ENCODE measurements at regions of chr3 and their contacts with region 1.

Region 1: DNA sequence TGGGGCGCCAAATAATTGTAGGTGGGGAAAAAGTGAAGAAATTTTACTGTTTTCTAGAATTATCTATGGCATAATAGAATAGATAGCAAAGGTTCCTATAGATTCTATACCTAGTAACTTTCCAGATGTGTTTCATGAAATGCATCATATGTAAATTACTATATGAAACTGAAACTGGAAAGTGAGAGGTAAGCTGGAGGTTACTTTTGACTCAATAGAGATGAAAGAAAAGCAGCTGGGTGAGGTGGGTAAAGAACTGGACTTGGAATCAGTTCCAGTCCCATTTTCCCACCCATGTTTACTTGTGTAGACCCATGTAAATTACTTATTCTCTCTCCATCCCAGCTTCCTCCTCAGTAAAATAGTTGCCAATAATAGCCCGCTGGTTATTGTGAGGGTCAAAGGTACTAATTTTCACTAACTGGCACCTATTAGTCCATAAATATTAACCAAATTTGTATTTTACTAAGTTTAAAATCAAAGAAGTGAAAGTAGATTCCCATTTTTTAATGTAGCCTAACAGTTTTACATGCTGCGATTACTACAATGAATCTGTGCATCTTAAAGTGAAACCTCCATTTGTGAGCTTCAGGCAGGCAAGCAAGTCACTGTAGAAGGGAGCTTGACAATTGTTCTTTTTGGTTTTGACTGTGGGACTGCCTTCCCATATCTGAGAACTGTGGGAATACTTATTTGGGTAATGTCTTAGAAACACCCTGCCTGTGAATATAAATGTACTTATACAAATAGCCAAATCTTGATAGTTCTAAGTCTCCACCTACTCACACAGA is 312.1 kb downstream of the SLC9A9 start:
- DNase-seq: peak; percentile 62
- CTCF ChIP-seq: no peak

Region 2: DNA sequence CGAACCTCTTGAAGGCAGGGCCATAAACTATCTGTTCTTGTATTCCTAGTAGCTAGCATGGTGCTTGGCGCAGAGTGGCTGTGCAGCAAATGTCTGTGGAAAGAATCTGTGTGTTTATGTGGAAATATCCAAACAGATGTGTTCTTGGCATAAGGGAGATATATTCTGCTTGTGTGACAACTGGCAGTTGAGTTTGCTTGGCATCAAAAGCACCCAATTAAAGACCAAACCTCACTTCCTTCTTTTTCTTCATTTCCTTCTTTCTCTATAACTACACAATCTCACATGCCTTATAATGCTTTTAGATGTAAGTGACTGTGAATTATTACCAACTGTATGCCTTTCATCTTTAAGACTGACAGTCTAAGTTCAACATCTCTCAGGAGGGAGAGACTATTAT is 15.6 kb after region 1 on chr3:
- CTCF ChIA-PET with region 1: interaction called, 10 read pairs
- POLR2A ChIA-PET with region 1: no interaction called
- DNase-seq: no peak
- CTCF ChIP-seq: no peak

Measured in GM10248 (cell line).